ENCODE measurements at regions of chr11 and their contacts with region 1.

Region 1: GRCh38 chr11:116397602-116398084 is 375.1 kb downstream of the BUD13 start:
- H3K4me3 ChIP-seq: no peak overlapping the region
- H3K27ac ChIP-seq: no peak overlapping the region
- H3K4me1 ChIP-seq: no peaks in the 10 kb centered on the region
- CTCF ChIP-seq: no peak

Region 2: GRCh38 chr11:116339306-116340098 is 58.1 kb before region 1 on chr11:
- CTCF ChIA-PET with region 1: no interaction called
- POLR2A ChIA-PET with region 1: interaction called, 12 read pairs
- H3K4me3 ChIP-seq: no peak overlapping the region
- H3K27ac ChIP-seq: no peak overlapping the region
- H3K4me1 ChIP-seq: no peaks in the 10 kb centered on the region
- CTCF ChIP-seq: no peak

Measured in HEK293 (cell line).